Activated naive CD4-positive, alpha-beta T cell treated with anti-CD3 and anti-CD28 coated beads for 36 hours (primary cell): ENCODE measurements at regions of chr11 and their contacts with region 1.

Region 1: DNA sequence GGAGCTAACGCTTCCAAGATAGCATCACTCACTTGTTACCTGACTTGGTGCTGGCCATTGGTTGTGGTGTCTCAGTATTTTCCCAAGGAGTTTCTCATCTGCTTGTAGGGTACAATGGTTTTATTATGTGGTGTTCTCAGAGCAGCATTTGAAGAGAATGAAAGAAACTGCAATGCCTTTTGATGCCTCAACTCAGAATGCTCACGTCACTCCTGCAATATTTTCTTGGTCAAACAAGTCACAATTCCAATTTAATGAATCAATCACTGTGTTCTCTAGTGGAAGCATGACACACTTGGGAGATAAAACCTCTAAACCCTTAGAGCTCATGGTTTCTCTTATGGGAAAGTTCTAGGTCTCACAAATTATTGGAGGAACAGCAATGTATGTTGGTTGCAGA is 2.0 kb upstream of the OR5D14 start:
- DNase-seq: no peak
- H3K4me3 Mint-ChIP-seq: no peak overlapping the region
- H3K27ac Mint-ChIP-seq: no peak overlapping the region
- H3K4me1 Mint-ChIP-seq: no peaks in the 10 kb centered on the region
- H3K27me3 Mint-ChIP-seq: no peaks in the 10 kb centered on the region

Region 2: GRCh38 chr11:55726715-55727324 is 66.5 kb before region 1 on chr11:
- CTCF ChIA-PET with region 1: no interaction called
- intact Hi-C with region 1: loop called (anchors 10 kb)
- DNase-seq: peak; percentile 11
- H3K4me3 Mint-ChIP-seq: no peak overlapping the region
- H3K27ac Mint-ChIP-seq: no peak overlapping the region
- H3K4me1 Mint-ChIP-seq: no peaks in the 10 kb centered on the region
- H3K27me3 Mint-ChIP-seq: no peaks in the 10 kb centered on the region